ENCODE measurements at regions of chr7 and their contacts with region 1.

Region 1: DNA sequence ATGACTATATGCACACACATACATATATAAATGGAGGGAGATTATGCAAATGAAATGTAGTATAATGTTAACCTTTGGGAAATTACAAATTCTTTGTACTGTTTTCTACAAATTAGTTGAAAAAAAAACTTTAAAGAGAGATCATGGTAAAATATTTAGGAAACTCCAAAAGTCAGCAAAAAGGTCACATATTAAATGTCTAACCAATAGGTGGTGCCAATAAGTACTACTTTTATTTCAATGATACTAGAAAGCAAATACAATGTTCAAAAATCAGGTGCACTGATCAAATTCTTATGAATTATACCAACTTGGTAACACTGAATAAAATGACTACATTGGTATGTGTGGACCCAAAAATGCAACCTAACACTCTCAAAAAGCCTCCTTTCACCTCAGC is 276.9 kb downstream of the DOCK4 start:
- DNase-seq: no peak
- H3K4me3 ChIP-seq: no peak overlapping the region
- H3K27ac ChIP-seq: no peak overlapping the region
- H3K4me1 ChIP-seq: no peaks in the 10 kb centered on the region
- H3K27me3 ChIP-seq: no peaks in the 10 kb centered on the region
- CTCF ChIP-seq: no peak
- POLR2A ChIP-seq: no peak

Region 2: DNA sequence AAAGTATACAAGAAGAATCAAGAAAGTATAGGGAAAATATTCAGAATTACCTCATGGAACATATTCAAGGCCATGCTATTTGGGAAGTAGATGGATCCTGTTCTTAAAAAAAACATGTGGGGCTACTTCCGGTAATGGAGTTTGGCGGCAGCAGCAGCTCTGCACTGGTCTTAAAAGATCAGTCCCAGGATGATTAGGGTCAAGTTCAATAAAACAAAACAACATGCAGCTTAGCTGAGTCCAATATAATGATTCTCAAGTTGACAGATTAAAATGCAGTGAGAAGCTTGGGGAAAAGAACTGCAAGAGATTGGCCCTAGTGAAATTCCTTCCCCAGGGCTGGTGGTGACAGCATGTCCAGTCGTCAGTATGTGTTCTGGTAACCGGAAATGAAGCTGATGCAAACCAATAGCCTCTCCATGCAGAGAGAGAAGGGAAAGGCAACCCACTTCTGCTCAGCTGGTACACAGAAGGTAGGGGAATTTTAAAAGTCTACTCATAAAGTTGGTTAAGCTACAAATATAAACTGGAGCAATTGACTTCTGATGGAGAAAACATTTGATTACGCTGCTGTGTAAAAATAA is 61.8 kb before region 1 on chr7:
- intact Hi-C with region 1: no loop called
- DNase-seq: no peak
- H3K4me3 ChIP-seq: no peak overlapping the region
- H3K27ac ChIP-seq: no peak overlapping the region
- H3K4me1 ChIP-seq: no peaks in the 10 kb centered on the region
- H3K27me3 ChIP-seq: no peaks in the 10 kb centered on the region
- CTCF ChIP-seq: no peak
- POLR2A ChIP-seq: no peak

Region 3: DNA sequence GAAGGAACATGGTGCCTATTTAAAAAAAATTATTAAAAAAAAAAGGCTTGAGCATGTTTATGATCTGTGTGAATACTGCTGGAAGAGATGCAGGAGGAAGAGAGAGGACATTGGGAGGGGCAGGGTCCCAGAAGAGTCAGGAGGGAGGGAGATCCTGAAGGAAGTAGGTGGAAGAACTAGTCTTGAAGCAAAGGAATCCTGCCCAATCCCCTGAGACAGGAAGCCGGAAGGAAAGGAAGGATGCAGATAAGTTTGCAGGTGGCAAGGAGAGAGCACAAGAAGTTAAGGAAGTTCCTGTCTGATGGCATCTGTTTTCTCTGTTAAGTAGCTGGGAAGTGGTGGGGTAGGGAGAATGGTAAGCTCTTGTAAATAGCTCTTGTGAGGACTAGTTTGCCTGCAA is 41.5 kb before region 1 on chr7:
- intact Hi-C with region 1: loop called (anchors 2 kb)
- DNase-seq: no peak
- H3K4me3 ChIP-seq: no peak overlapping the region
- H3K27ac ChIP-seq: no peak overlapping the region
- H3K4me1 ChIP-seq: no peaks in the 10 kb centered on the region
- H3K27me3 ChIP-seq: no peaks in the 10 kb centered on the region
- CTCF ChIP-seq: no peak
- POLR2A ChIP-seq: no peak

Measured in breast epithelium (tissue), 4 donors.